ENCODE measurements at regions of chr5 and their contacts with region 1.

Region 1: GRCh38 chr5:152349683-152350526 is 55.2 kb downstream of the NMUR2 start:
- DNase-seq: peak; percentile 70
- H3K4me3 Mint-ChIP-seq: no peak overlapping the region
- H3K27ac Mint-ChIP-seq: no peak overlapping the region
- H3K4me1 Mint-ChIP-seq: no peaks in the 10 kb centered on the region
- H3K27me3 Mint-ChIP-seq: no peaks in the 10 kb centered on the region
- CTCF ChIP-seq: peak; percentile 97

Region 2: GRCh38 chr5:151799407-151799806 is 550.5 kb before region 1 on chr5:
- CTCF ChIA-PET with region 1: interaction called, 15 read pairs
- POLR2A ChIA-PET with region 1: interaction called, 3 read pairs
- intact Hi-C with region 1: no loop called
- DNase-seq: peak; percentile 63
- H3K4me3 Mint-ChIP-seq: no peak overlapping the region
- H3K27ac Mint-ChIP-seq: peak overlapping the region; percentile 28
- H3K4me1 Mint-ChIP-seq: peaks cover 16% of the 10 kb centered on the region
- H3K27me3 Mint-ChIP-seq: no peaks in the 10 kb centered on the region
- CTCF ChIP-seq: no peak

Region 3: DNA sequence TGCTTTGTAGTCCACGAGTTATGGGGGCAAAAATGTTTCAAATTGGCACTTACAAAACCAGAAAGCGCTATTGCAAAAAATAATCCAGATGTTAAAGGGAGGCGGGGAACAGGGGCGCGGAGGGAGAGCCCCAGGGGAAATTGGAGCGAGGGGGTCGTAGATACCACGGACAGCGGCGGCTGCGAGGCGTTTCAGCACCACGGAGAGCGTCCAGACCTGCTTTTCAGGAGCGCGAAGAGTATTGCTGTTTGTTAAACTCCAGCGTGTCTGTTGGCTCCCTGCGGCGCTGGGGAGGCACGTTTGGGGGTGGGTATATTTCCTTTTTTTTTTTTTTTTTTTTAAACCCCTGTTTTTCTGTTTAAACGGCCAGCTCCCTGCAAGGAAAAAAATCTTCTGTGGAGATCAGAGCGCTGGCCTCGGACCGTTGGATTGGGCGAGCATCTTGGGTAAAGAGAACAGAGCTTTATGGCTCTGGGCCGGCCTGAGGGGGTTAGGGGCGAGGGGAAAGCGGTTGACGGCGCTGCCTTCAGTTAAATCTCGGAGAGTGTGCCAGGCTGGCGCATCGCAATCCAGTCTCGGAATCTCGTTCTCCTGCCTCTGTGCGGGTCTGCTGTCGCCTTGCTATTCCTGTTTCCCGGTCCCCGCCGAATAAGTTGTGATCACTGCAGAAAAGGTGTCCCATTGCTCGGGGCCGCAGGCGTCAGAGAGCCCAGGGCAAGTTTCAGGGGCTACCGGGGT is 425.2 kb before region 1 on chr5 and contains the start of gene GLRA1:
- CTCF ChIA-PET with region 1: interaction called, 10 read pairs
- POLR2A ChIA-PET with region 1: no interaction called
- intact Hi-C with region 1: no loop called
- DNase-seq: peak; percentile 70
- H3K4me3 Mint-ChIP-seq: no peak within 1 kb of the TSS
- H3K27ac Mint-ChIP-seq: no peak within 1 kb of the TSS
- H3K4me1 Mint-ChIP-seq: no peaks in the 10 kb centered on the region
- H3K27me3 Mint-ChIP-seq: peaks cover 32% of the 10 kb centered on the region
- CTCF ChIP-seq: no peak
- total RNA-seq, gene GLRA1: not detected in 2 replicates

Region 4: GRCh38 chr5:152264645-152265254 is 85.2 kb before region 1 on chr5:
- CTCF ChIA-PET with region 1: no interaction called
- POLR2A ChIA-PET with region 1: no interaction called
- intact Hi-C with region 1: no loop called
- DNase-seq: peak; percentile 43
- H3K4me3 Mint-ChIP-seq: no peak overlapping the region
- H3K27ac Mint-ChIP-seq: no peak overlapping the region
- H3K4me1 Mint-ChIP-seq: peaks cover 5% of the 10 kb centered on the region
- H3K27me3 Mint-ChIP-seq: peaks cover 20% of the 10 kb centered on the region
- CTCF ChIP-seq: no peak

Region 5: DNA sequence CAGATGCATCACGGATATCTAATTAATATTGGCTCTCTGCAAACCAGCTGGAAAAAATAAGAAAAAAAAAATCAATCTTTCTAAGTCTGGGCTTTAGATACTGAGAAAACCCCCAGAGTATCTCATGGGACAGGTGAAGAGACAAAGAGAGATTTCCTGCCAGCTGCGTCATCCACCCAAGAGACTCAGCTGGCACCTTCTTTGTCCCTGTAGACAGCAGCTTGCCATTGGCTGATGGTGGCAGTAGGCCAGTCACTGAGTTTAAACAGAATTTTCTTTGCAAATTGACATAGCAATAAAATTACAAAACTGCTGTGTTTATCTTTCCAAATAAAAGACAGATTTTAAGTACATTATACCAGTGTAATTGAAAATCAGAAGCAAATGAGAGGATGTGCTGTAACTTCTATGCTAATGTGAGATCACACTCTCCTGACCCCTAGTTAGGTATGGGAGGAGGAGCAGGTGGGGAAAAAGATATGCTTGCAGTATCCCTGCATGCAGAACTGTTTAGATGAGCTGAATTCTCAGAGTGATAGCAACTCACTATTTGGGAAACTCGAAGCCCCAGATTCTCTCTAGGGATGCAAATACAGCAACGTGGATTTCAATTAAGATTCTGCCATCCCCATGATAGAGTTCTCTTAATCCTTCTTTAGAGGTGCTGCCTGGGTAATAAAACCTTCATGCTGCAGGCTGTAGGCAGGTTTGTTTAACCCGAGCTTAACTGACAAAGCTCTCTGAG is 17.0 kb before region 1 on chr5:
- CTCF ChIA-PET with region 1: interaction called, 31 read pairs
- POLR2A ChIA-PET with region 1: interaction called, 3 read pairs
- intact Hi-C with region 1: no loop called
- DNase-seq: no peak
- H3K4me3 Mint-ChIP-seq: no peak overlapping the region
- H3K27ac Mint-ChIP-seq: no peak overlapping the region
- H3K4me1 Mint-ChIP-seq: no peaks in the 10 kb centered on the region
- H3K27me3 Mint-ChIP-seq: peaks cover 16% of the 10 kb centered on the region
- CTCF ChIP-seq: no peak

Region 6: GRCh38 chr5:152379331-152379730 is 29.4 kb after region 1 on chr5:
- CTCF ChIA-PET with region 1: interaction called, 18 read pairs
- POLR2A ChIA-PET with region 1: no interaction called
- intact Hi-C with region 1: no loop called
- DNase-seq: no peak
- H3K4me3 Mint-ChIP-seq: no peak overlapping the region
- H3K27ac Mint-ChIP-seq: no peak overlapping the region
- H3K4me1 Mint-ChIP-seq: no peaks in the 10 kb centered on the region
- H3K27me3 Mint-ChIP-seq: peaks cover 14% of the 10 kb centered on the region
- CTCF ChIP-seq: no peak

Region 7: DNA sequence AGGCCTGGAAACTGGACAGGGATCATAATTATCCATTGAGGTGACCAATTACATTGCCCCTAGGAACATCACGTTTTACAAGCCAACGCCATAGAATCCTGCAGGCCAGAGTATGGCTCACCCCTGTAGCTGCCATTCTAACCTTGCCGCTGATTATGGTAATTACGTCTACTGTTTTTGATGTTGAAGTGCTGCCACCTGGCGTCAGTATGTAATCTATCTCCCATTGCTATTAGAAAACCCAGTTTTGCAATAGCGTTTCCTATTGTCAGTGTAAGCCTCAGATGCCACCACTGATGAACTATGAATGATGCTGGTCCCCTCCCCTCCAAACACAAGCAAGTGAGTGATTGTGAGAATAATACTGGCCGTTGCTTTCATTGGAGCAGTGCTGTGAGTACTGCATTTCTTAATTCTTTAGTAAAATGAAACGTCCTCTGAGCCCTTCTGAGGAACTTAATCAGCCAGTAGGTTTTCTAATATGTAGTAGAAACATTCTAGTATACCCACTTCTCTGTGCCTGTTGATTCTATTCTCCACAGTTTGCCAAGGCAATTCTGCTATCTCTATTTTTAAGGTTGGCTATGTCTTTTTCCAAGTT is 155.6 kb after region 1 on chr5:
- CTCF ChIA-PET with region 1: interaction called, 13 read pairs
- POLR2A ChIA-PET with region 1: no interaction called
- intact Hi-C with region 1: loop called (anchors 5 kb)
- DNase-seq: peak; percentile 81
- H3K4me3 Mint-ChIP-seq: no peak overlapping the region
- H3K27ac Mint-ChIP-seq: no peak overlapping the region
- H3K4me1 Mint-ChIP-seq: no peaks in the 10 kb centered on the region
- H3K27me3 Mint-ChIP-seq: peaks cover 33% of the 10 kb centered on the region
- CTCF ChIP-seq: peak; percentile 68